WTC11 (cell line): ENCODE measurements at regions of chr2 and their contacts with region 1.

Region 1: DNA sequence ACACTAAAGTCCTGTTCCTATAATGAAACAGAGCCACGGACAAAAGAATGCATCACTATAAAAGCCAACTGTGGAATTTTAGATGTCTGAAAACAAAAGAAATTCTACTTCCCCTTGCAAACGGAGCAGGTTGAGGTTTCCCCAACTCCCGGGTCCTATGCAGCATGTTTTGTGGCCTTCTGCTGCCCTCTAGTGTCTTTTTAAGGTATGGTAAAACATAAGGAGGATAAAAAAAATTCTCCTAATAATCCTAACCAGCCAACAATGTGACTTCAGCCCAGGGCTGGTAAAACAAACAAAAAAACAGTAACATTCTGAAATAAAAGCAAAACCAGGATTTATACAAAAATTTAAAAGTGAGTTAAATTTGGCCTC is 539.5 kb downstream of the NRXN1 start:
- DNase-seq: peak; percentile 33
- ATAC-seq: peak; percentile 80
- H3K4me3 Mint-ChIP-seq: no peak overlapping the region
- H3K27ac Mint-ChIP-seq: no peak overlapping the region
- H3K4me1 Mint-ChIP-seq: peaks cover 14% of the 10 kb centered on the region
- H3K27me3 Mint-ChIP-seq: no peaks in the 10 kb centered on the region
- CTCF ChIP-seq: no peak; the same call in 1 of the 2 replicates

Region 2: DNA sequence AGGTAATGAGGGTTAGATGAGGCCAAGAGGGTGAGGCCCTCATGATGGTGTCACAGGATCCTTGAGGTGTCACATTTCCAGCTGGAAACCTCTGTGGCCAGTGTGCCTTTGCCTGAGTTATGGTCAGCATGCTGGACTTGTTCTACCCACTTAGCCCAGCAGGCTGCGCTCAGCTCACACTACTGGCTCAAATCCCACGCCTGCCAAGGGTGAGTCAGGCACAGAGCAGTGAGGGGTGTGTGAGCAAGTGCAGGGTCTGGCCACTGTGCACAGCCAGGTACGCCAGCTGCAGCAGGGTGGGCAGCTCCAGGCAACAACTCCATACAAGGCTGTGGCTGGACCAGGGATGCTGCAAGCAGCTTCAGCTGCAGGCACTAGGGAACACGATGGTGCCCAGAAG is 721.5 kb before region 1 on chr2:
- CTCF ChIA-PET with region 1: interaction called, 17 read pairs
- POLR2A ChIA-PET with region 1: no interaction called
- DNase-seq: peak; percentile 84
- ATAC-seq: peak; percentile 100
- H3K4me3 Mint-ChIP-seq: no peak overlapping the region
- H3K27ac Mint-ChIP-seq: no peak overlapping the region
- H3K4me1 Mint-ChIP-seq: peaks cover 4% of the 10 kb centered on the region; the same call in 1 of the 2 replicates
- H3K27me3 Mint-ChIP-seq: no peaks in the 10 kb centered on the region
- CTCF ChIP-seq: peak; percentile 59

Region 3: GRCh38 chr2:50347358-50348044 is 145.0 kb before region 1 on chr2:
- CTCF ChIA-PET with region 1: interaction called, 10 read pairs
- POLR2A ChIA-PET with region 1: no interaction called
- DNase-seq: peak; percentile 55
- ATAC-seq: peak; percentile 58
- H3K4me3 Mint-ChIP-seq: peak overlapping the region; percentile 84
- H3K27ac Mint-ChIP-seq: no peak overlapping the region
- H3K4me1 Mint-ChIP-seq: peaks cover 33% of the 10 kb centered on the region
- H3K27me3 Mint-ChIP-seq: peaks cover 60% of the 10 kb centered on the region
- CTCF ChIP-seq: no peak

Region 4: GRCh38 chr2:50408936-50409335 is 83.5 kb before region 1 on chr2:
- CTCF ChIA-PET with region 1: no interaction called
- POLR2A ChIA-PET with region 1: no interaction called
- DNase-seq: no peak
- ATAC-seq: no peak
- H3K4me3 Mint-ChIP-seq: no peak overlapping the region
- H3K27ac Mint-ChIP-seq: no peak overlapping the region
- H3K4me1 Mint-ChIP-seq: no peaks in the 10 kb centered on the region
- H3K27me3 Mint-ChIP-seq: no peaks in the 10 kb centered on the region; the same call in 1 of the 2 replicates
- CTCF ChIP-seq: no peak

Region 5: DNA sequence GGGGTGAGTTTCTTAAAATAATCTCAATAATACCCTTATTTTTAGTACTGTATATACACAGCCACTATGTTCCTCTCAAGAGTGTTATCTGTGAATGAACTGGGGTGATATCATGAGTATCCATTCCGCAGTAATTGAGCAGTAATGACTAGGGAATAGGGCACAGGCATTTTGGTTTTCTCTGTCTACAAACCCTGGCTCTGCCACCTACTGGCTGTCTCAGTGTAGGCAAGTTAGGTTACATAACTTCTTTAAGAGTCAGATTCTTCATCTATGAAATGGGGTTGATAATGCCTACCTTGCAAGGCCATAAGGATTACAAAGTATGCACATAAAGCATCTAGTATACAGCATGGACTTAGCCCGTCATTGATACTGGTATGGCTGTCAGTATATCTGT is 16.3 kb before region 1 on chr2:
- CTCF ChIA-PET with region 1: interaction called, 12 read pairs
- POLR2A ChIA-PET with region 1: no interaction called
- DNase-seq: peak; percentile 13
- ATAC-seq: peak; percentile 82
- H3K4me3 Mint-ChIP-seq: no peak overlapping the region
- H3K27ac Mint-ChIP-seq: no peak overlapping the region
- H3K4me1 Mint-ChIP-seq: no peaks in the 10 kb centered on the region
- H3K27me3 Mint-ChIP-seq: no peaks in the 10 kb centered on the region; the same call in 1 of the 2 replicates
- CTCF ChIP-seq: no peak